GM12878 (cell line): ENCODE measurements at regions of chr15 and their contacts with region 1.

Region 1: GRCh38 chr15:99059010-99059981 is 45.6 kb upstream of the SYNM start:
- DNase-seq: no peak
- ATAC-seq: peak; percentile 85
- H3K4me3 ChIP-seq: peak overlapping the region; percentile 69; the same call in 1 of the 2 replicates
- H3K27ac ChIP-seq: peak overlapping the region; percentile 43
- H3K4me1 ChIP-seq: peaks cover 16% of the 10 kb centered on the region
- H3K27me3 ChIP-seq: no peaks in the 10 kb centered on the region
- CTCF ChIP-seq: peak; percentile 57 to 71 (median 67); a peak in 5 of 6 replicates
- EP300 ChIP-seq: no peak
- POLR2A ChIP-seq: no peak
- RAD21 ChIP-seq: peak; percentile 81

Region 2: DNA sequence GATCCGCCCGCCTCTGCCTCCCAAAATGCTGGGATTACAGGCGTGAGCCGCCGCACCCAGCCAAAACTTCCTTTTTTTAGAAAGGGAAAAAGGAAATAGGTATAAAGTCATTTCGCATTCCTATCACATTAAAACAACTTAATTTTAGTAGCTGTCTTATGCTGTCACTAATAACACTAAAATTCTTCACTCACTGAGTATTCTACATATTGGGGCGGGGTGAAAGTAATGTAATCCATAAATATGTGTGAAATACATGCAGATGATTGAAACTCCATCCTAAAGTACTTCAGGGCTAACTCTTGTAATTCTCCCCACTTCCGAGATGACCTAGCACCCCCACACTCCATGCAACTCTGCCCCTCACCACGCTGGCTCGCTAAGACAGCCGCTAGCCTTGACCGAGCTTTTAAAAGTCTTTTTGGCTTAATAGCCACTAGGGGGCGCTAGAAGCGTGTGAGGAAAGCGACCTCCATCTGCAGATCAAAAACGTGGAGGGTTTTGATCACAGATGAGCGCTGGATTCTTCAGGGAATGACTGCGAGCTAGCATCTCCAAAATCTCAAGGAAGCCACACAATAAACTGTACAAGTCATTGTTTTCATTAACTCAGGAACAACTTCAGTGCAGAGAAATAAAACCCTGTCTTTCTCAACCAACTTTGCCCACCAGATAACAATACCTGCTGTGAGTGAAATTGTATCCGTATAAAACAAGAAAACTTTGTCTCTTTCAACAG is 540.3 kb before region 1 on chr15:
- CTCF ChIA-PET with region 1: interaction called, 10 read pairs
- POLR2A ChIA-PET with region 1: interaction called, 7 read pairs
- RAD21 ChIA-PET with region 1: no interaction called
- SMC1A ChIA-PET with region 1: interaction called, 4 read pairs
- in situ Hi-C with region 1: no loop called
- intact Hi-C with region 1: no loop called
- DNase-seq: no peak
- ATAC-seq: peak; percentile 95
- H3K4me3 ChIP-seq: no peak overlapping the region
- H3K27ac ChIP-seq: no peak overlapping the region
- H3K4me1 ChIP-seq: no peaks in the 10 kb centered on the region
- H3K27me3 ChIP-seq: no peaks in the 10 kb centered on the region
- CTCF ChIP-seq: peak; percentile 64 to 75 (median 68)
- EP300 ChIP-seq: no peak
- POLR2A ChIP-seq: no peak
- RAD21 ChIP-seq: peak; percentile 75

Region 3: GRCh38 chr15:98779463-98780071 is 279.7 kb before region 1 on chr15:
- CTCF ChIA-PET with region 1: interaction called, 31 read pairs
- POLR2A ChIA-PET with region 1: no interaction called
- RAD21 ChIA-PET with region 1: interaction called, 7 read pairs
- SMC1A ChIA-PET with region 1: interaction called, 19 read pairs
- in situ Hi-C with region 1: no loop called
- intact Hi-C with region 1: loop called (anchors 5 kb)
- DNase-seq: peak; percentile 41
- ATAC-seq: peak; percentile 89
- H3K4me3 ChIP-seq: no peak overlapping the region
- H3K27ac ChIP-seq: no peak overlapping the region
- H3K4me1 ChIP-seq: peaks cover 19% of the 10 kb centered on the region
- H3K27me3 ChIP-seq: no peaks in the 10 kb centered on the region
- CTCF ChIP-seq: peak; percentile 80 to 99 (median 96)
- EP300 ChIP-seq: no peak
- POLR2A ChIP-seq: no peak
- RAD21 ChIP-seq: peak; percentile 84

Region 4: GRCh38 chr15:98904544-98904943 is 154.8 kb before region 1 on chr15:
- CTCF ChIA-PET with region 1: interaction called, 4 read pairs
- POLR2A ChIA-PET with region 1: no interaction called
- RAD21 ChIA-PET with region 1: interaction called, 3 read pairs
- SMC1A ChIA-PET with region 1: interaction called, 8 read pairs
- in situ Hi-C with region 1: no loop called
- intact Hi-C with region 1: loop called (anchors 5 kb)
- DNase-seq: no peak
- ATAC-seq: peak; percentile 82
- H3K4me3 ChIP-seq: no peak overlapping the region
- H3K27ac ChIP-seq: no peak overlapping the region
- H3K4me1 ChIP-seq: no peaks in the 10 kb centered on the region; the same call in 1 of the 2 replicates
- H3K27me3 ChIP-seq: no peaks in the 10 kb centered on the region
- CTCF ChIP-seq: peak; percentile 55 to 63 (median 62)
- EP300 ChIP-seq: no peak
- POLR2A ChIP-seq: no peak
- RAD21 ChIP-seq: peak; percentile 51

Region 5: DNA sequence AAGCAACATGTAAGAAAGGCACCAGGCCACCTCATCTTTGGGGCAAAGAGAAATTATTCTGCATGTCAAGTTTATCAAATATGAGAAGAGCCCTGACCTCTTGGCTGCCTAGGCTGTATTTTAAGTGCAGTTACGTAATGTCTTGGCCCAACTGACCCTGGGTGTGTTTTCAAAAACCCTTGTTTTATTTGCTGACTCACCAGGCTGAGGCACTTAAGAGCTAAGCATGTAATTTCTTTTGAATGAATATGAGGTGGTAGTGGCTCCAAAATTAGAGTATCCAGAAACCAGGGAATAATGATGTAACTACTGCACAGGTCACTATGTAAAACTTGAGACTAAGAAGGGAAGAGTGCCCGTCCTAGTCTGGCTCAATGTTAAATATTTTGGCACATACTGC is 76.0 kb before region 1 on chr15:
- CTCF ChIA-PET with region 1: interaction called, 4 read pairs
- POLR2A ChIA-PET with region 1: interaction called, 4 read pairs
- RAD21 ChIA-PET with region 1: interaction called, 13 read pairs
- SMC1A ChIA-PET with region 1: interaction called, 15 read pairs
- in situ Hi-C with region 1: no loop called
- intact Hi-C with region 1: loop called (anchors 1 kb)
- DNase-seq: no peak
- ATAC-seq: no peak
- H3K4me3 ChIP-seq: no peak overlapping the region
- H3K27ac ChIP-seq: no peak overlapping the region
- H3K4me1 ChIP-seq: peaks cover 22% of the 10 kb centered on the region
- H3K27me3 ChIP-seq: no peaks in the 10 kb centered on the region
- CTCF ChIP-seq: no peak
- EP300 ChIP-seq: no peak
- POLR2A ChIP-seq: no peak
- RAD21 ChIP-seq: no peak

Region 6: DNA sequence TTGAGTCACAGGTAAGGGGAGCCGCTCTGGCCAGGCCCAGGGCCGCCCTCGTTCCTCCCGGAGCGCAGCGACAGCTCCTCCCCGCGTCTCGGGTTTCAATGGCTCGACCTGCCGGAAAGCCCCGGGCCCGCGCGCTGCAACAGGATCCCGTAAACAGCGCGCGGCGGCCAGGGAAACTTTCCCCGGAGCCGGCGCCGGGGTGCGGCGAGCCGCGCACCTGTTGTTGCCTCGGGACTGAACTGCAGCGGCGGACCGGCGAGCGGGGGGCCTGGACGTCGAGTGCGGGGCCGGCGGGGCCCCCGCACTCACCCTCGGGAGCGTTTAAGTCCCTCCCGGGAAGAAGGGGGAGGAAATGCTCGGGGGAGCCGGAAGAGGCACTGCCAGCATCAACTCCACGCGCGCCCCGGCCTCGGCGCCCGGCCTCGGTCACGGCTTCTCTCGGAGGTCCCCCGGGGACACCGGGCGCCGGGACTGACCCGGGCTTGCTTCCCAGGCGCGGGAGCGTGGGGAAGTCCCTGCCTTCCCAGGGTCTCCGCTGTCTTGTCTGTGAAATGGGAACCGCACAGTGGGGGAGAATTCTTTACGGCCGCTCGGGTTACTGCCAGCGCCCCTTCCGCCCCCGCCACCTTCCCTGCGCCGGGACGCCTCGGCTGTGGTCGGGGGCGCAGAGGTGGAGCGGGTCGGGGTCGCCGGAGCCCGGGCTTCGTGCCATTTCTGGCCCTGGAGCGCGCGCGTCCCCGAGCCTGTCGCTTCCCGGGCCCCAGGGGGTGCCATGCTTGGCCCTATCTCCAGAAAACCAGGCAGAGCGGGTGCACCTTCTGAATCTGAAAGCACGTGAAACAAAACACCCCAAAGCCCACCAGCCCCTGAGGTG is 44.3 kb before region 1 on chr15:
- CTCF ChIA-PET with region 1: interaction called, 7 read pairs
- POLR2A ChIA-PET with region 1: interaction called, 3 read pairs
- RAD21 ChIA-PET with region 1: interaction called, 12 read pairs
- SMC1A ChIA-PET with region 1: interaction called, 29 read pairs
- in situ Hi-C with region 1: no loop called
- intact Hi-C with region 1: loop called (anchors 2 kb)
- DNase-seq: no peak
- ATAC-seq: peak; percentile 91
- H3K4me3 ChIP-seq: peak overlapping the region; percentile 68
- H3K27ac ChIP-seq: peak overlapping the region; percentile 89
- H3K4me1 ChIP-seq: no peaks in the 10 kb centered on the region; the same call in 1 of the 2 replicates
- H3K27me3 ChIP-seq: no peaks in the 10 kb centered on the region
- CTCF ChIP-seq: no peak
- EP300 ChIP-seq: no peak
- POLR2A ChIP-seq: peak; percentile 45
- RAD21 ChIP-seq: no peak

Region 7: GRCh38 chr15:99030839-99031238 is 28.5 kb before region 1 on chr15:
- CTCF ChIA-PET with region 1: no interaction called
- POLR2A ChIA-PET with region 1: no interaction called
- RAD21 ChIA-PET with region 1: interaction called, 4 read pairs
- SMC1A ChIA-PET with region 1: interaction called, 10 read pairs
- in situ Hi-C with region 1: no loop called
- intact Hi-C with region 1: no loop called
- DNase-seq: no peak
- ATAC-seq: no peak
- H3K4me3 ChIP-seq: no peak overlapping the region
- H3K27ac ChIP-seq: no peak overlapping the region
- H3K4me1 ChIP-seq: no peaks in the 10 kb centered on the region
- H3K27me3 ChIP-seq: no peaks in the 10 kb centered on the region
- CTCF ChIP-seq: no peak
- EP300 ChIP-seq: no peak
- POLR2A ChIP-seq: no peak
- RAD21 ChIP-seq: no peak

Region 8: DNA sequence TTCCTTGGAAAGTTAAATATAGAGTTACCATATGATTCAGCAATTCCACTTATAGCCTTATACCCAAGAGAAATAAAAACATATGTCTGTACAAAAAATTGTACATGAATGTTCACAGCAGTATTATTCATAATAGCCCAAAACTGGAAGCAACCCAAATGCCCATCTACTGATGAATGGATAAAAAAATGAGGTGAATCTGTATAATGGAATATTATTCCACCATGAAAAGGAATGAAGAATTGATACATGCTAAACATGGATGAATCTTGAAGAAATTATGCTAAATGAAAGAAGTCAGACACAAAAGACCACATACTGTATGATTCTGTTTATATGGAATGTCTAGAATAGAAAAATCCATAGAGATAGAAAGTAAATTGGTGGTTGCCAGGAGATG is 128.6 kb after region 1 on chr15:
- CTCF ChIA-PET with region 1: no interaction called
- POLR2A ChIA-PET with region 1: no interaction called
- RAD21 ChIA-PET with region 1: no interaction called
- SMC1A ChIA-PET with region 1: no interaction called
- in situ Hi-C with region 1: no loop called
- intact Hi-C with region 1: no loop called
- DNase-seq: no peak
- ATAC-seq: no peak
- H3K4me3 ChIP-seq: no peak overlapping the region
- H3K27ac ChIP-seq: no peak overlapping the region
- H3K4me1 ChIP-seq: no peaks in the 10 kb centered on the region
- H3K27me3 ChIP-seq: no peaks in the 10 kb centered on the region
- CTCF ChIP-seq: no peak
- EP300 ChIP-seq: no peak
- POLR2A ChIP-seq: no peak
- RAD21 ChIP-seq: no peak